IMR-90 (cell line): ENCODE measurements at regions of chr9 and their contacts with region 1.

Region 1: GRCh38 chr9:114108016-114108833 is 9.1 kb upstream of the KIF12 start:
- DNase-seq: peak; percentile 77
- ATAC-seq: peak; percentile 100
- H3K4me3 ChIP-seq: no peak overlapping the region
- H3K27ac ChIP-seq: no peak overlapping the region
- H3K4me1 ChIP-seq: peaks cover 6% of the 10 kb centered on the region
- H3K27me3 ChIP-seq: peaks cover 9% of the 10 kb centered on the region
- CTCF ChIP-seq: peak; percentile 99
- POLR2A ChIP-seq: peak; percentile 55; the same call in 1 of the 2 replicates
- RAD21 ChIP-seq: peak; percentile 98

Region 2: GRCh38 chr9:113675475-113675941 is 432.7 kb before region 1 on chr9:
- CTCF ChIA-PET with region 1: no interaction called
- POLR2A ChIA-PET with region 1: no interaction called
- dilution Hi-C with region 1: no loop called
- in situ Hi-C with region 1: no loop called
- intact Hi-C with region 1: no loop called
- DNase-seq: peak; percentile 100
- ATAC-seq: peak; percentile 90
- H3K4me3 ChIP-seq: no peak overlapping the region
- H3K27ac ChIP-seq: peak overlapping the region; percentile 73
- H3K4me1 ChIP-seq: peaks cover 21% of the 10 kb centered on the region
- H3K27me3 ChIP-seq: no peaks in the 10 kb centered on the region
- CTCF ChIP-seq: no peak
- POLR2A ChIP-seq: peak; percentile 71; the same call in 1 of the 2 replicates
- RAD21 ChIP-seq: no peak

Region 3: DNA sequence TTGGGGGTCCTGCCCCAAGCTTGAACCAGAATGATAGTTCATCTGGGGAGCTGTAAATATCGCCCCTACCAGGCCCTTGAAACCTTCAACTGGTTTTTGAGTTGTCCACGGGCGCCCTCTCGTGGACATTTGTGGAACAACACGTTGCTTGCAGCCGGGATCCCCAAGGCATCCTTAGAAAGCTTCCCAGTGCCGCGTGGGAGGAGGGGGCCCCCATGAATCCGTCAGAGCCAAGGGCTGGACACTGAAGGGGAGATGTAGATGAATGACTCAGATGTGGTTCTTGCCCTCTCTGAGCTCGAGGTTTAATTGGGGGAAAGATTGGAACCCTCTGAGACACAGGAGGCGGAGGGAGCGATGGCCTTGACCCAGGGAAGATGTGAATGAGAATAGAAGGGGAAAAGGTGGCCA is 182.8 kb after region 1 on chr9:
- CTCF ChIA-PET with region 1: interaction called, 16 read pairs
- POLR2A ChIA-PET with region 1: no interaction called
- dilution Hi-C with region 1: no loop called
- in situ Hi-C with region 1: loop called (anchors 5 kb)
- intact Hi-C with region 1: loop called (anchors 1 kb)
- DNase-seq: peak; percentile 67
- ATAC-seq: peak; percentile 75
- H3K4me3 ChIP-seq: no peak overlapping the region
- H3K27ac ChIP-seq: no peak overlapping the region
- H3K4me1 ChIP-seq: peaks cover 9% of the 10 kb centered on the region
- H3K27me3 ChIP-seq: no peaks in the 10 kb centered on the region
- CTCF ChIP-seq: peak; percentile 91
- POLR2A ChIP-seq: no peak
- RAD21 ChIP-seq: peak; percentile 88

Region 4: DNA sequence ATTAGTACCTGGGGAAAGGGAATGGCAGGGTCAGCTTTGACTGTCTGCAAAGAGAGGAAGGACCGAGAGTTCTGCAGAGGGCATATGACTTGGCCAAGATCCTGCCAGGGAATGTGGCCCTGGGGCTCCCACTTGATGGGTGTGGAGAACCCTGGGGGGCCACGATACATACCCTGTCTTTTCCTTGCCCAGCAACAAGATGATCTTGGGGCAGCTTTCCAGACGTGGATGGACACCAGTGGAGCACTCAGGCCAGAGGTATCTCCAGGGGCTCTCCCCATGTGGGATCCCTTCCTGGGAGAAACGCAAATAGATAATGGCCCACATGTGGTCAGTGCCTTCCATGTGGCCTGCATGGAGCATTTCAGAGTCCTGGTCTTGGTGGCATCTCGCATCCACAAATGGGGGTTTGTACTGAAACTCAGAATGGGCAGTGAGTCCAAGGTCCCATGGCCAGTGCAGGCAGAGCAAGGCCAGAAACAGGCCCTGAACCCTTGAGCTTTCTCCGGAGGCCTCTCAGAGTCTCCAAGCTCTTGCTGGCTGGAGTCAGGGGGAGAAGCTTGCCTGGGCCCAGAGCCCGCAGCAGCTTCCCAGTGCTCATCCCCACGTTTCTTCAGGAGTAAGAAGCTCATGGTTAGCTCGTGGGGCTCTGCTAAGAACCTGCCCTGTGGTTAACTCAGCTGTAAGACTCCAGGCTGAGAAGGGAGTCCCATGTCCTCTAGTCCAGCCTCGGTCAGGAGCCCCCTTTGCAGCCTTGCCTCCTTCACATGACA is 196.4 kb after region 1 on chr9:
- CTCF ChIA-PET with region 1: interaction called, 5 read pairs
- POLR2A ChIA-PET with region 1: no interaction called
- dilution Hi-C with region 1: no loop called
- in situ Hi-C with region 1: no loop called
- intact Hi-C with region 1: loop called (anchors 1 kb)
- DNase-seq: no peak
- ATAC-seq: no peak
- H3K4me3 ChIP-seq: no peak overlapping the region
- H3K27ac ChIP-seq: no peak overlapping the region
- H3K4me1 ChIP-seq: peaks cover 3% of the 10 kb centered on the region; the same call in 1 of the 2 replicates
- H3K27me3 ChIP-seq: no peaks in the 10 kb centered on the region
- CTCF ChIP-seq: no peak
- POLR2A ChIP-seq: no peak
- RAD21 ChIP-seq: no peak

Region 5: DNA sequence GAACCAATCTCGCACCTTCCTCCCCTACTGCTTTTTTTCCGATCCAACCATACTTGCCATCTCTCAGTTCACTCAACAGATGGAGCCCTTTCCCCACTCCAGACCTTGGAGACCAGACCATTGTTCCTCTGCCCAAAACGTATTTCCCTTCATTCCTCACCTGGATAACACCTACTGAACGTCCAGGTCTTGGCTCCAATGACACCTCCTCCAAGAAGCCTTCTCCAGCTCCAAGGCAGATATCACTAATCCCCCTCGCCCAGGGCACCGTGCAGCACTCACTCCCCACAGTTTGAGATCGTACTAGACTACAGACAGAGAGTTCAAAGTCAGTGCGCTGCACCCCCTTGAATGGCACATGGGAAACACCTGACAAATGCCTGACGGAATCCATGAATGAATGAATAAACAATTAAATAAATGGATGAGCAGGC is 326.7 kb after region 1 on chr9:
- CTCF ChIA-PET with region 1: no interaction called
- POLR2A ChIA-PET with region 1: no interaction called
- dilution Hi-C with region 1: no loop called
- in situ Hi-C with region 1: no loop called
- intact Hi-C with region 1: no loop called
- DNase-seq: peak; percentile 37
- ATAC-seq: peak; percentile 91
- H3K4me3 ChIP-seq: no peak overlapping the region
- H3K27ac ChIP-seq: no peak overlapping the region
- H3K4me1 ChIP-seq: no peaks in the 10 kb centered on the region
- H3K27me3 ChIP-seq: peaks cover 13% of the 10 kb centered on the region
- CTCF ChIP-seq: peak; percentile 69
- POLR2A ChIP-seq: no peak
- RAD21 ChIP-seq: peak; percentile 79